Mammary epithelial cell (primary cell): ENCODE measurements at regions of chr11 and their contacts with region 1.

Region 1: DNA sequence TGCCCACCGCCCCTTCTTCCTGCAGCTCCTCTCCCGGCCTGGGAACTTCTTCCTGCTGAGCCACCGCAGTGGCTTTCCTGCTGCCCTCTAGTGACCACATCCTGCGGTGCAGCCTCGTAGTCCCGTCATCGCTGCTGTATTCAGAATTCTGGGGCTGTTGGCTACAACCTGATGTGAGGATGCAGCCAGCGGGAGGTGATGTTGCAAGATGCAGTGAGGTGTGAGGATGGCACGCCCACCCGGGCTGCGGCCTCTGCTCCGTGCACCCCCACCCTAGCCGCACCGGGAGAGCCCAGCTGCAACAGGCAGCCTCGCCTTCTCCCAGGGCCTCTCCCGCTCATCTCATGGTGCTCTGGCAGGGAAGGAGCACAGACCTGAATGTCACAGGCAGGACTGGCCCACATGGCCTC is 10.1 kb downstream of the CHST1 start:
- DNase-seq: peak; percentile 36
- H3K4me3 ChIP-seq: no peak overlapping the region
- H3K27ac ChIP-seq: no peak overlapping the region
- H3K4me1 ChIP-seq: peaks cover 7% of the 10 kb centered on the region
- H3K27me3 ChIP-seq: no peaks in the 10 kb centered on the region
- CTCF ChIP-seq: peak; percentile 92 to 93

Region 2: DNA sequence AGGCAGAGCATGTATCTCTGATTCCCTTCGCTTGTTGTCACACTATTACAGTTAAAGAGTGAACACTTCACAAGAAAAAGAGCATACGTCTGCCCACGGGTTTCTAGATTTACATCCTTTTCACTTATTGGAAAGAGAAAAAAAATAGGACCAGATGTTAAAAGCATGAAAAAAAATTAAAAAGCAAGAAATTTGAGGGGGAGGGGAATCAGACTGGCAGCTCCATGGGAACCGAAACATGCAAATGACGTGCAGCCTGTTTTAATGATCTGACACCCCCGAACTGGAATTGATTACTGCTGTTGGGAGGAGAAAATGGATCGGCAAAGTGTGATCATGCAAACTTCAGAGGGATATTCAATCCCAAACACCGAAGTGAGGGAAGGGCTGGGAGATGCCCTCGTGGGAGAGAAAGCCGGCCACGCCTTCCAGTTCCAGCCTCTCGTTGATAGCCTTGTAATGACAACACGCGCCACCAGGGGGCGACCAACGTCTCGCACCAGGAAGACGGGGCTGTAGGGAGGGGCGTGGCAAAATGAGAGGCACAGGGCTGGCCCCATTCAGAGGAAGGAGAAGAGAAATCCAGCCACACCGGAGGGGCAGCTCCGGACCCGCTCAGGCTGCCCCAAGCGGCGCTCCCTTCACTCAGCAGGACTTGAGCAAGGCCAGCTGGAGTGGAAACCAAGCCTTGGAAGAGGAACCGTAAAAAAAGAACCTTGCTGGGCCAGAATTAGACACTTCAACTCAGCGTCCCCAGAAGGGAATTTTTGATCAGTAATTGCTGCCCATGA is 315.4 kb before region 1 on chr11:
- CTCF ChIA-PET with region 1: no interaction called
- dilution Hi-C with region 1: no loop called
- in situ Hi-C with region 1: no loop called
- intact Hi-C with region 1: loop called (anchors 1 kb)
- DNase-seq: peak; percentile 68
- H3K4me3 ChIP-seq: no peak overlapping the region
- H3K27ac ChIP-seq: no peak overlapping the region
- H3K4me1 ChIP-seq: peaks cover 11% of the 10 kb centered on the region
- H3K27me3 ChIP-seq: peaks cover 8% of the 10 kb centered on the region
- CTCF ChIP-seq: peak; percentile 84 to 85

Region 3: DNA sequence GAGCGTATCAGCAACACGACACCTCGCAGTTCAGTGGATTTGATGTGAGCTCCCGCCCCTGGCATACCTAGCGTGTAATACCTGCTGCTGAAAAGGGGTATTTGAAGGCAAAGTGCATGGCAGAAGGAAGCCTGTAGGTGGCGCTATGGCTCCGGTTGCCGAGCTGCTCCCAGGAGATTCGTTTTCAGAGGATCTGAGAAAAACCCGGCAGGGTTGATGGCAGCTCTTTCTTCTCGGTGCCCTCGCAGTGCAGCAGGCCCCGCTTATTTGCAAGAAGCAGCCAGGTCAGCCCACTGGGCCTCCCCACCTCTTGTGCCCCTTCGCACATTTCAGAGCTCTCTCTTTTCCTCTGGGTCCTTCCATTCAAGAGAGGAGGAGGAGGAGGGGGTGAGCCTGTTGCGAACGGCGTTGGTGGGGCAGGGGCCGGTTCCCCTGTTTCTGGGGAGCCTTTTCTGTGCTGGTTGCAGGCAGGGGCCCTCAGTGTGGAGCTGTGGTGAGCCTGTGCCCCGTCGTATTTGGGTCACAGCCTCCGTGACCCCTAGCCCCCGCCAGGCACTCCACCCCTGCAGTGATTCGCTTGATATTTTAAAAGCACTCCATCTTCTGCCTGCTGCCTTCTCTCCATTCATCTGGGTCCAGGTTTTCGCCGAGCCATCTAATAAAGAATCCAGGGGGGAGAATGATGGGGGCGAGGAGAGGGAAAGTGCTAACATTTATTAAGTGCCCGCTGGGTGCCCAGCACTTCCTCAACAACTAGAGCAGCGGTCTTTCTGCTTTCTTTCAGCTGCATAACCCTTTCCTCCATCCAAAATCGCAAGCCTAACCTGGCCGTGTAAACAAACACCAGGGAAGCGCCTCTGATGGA is 283.9 kb before region 1 on chr11:
- CTCF ChIA-PET with region 1: interaction called, 9 read pairs
- dilution Hi-C with region 1: no loop called
- in situ Hi-C with region 1: no loop called
- intact Hi-C with region 1: loop called (anchors 1 kb)
- DNase-seq: peak; percentile 38
- H3K4me3 ChIP-seq: no peak overlapping the region
- H3K27ac ChIP-seq: no peak overlapping the region
- H3K4me1 ChIP-seq: no peaks in the 10 kb centered on the region
- H3K27me3 ChIP-seq: peaks cover under 1% of the 10 kb centered on the region
- CTCF ChIP-seq: peak; percentile 94 to 99

Region 4: GRCh38 chr11:45405916-45406670 is 249.3 kb before region 1 on chr11:
- CTCF ChIA-PET with region 1: no interaction called
- dilution Hi-C with region 1: no loop called
- in situ Hi-C with region 1: no loop called
- intact Hi-C with region 1: loop called (anchors 1 kb)
- DNase-seq: no peak
- H3K4me3 ChIP-seq: no peak overlapping the region
- H3K27ac ChIP-seq: no peak overlapping the region
- H3K4me1 ChIP-seq: no peaks in the 10 kb centered on the region
- H3K27me3 ChIP-seq: peaks cover 2% of the 10 kb centered on the region
- CTCF ChIP-seq: peak; percentile 39 to 58

Region 5: GRCh38 chr11:45527898-45528297 is 127.5 kb before region 1 on chr11:
- CTCF ChIA-PET with region 1: no interaction called
- dilution Hi-C with region 1: no loop called
- in situ Hi-C with region 1: no loop called
- intact Hi-C with region 1: no loop called
- DNase-seq: peak; percentile 10
- H3K4me3 ChIP-seq: no peak overlapping the region
- H3K27ac ChIP-seq: no peak overlapping the region
- H3K4me1 ChIP-seq: no peaks in the 10 kb centered on the region
- H3K27me3 ChIP-seq: peaks cover 7% of the 10 kb centered on the region
- CTCF ChIP-seq: no peak